ENCODE measurements at regions of chr1 and their contacts with region 1.

Region 1: GRCh38 chr1:202888531-202889360 is at the start of gene RABIF:
- DNase-seq: peak; percentile 97 to 99
- ATAC-seq: peak; percentile 98
- H3K4me3 ChIP-seq: peak within 1 kb of the TSS; percentile 56 to 62
- H3K27ac ChIP-seq: peak within 1 kb of the TSS; percentile 51 to 90
- H3K4me1 ChIP-seq: no peaks in the 10 kb centered on the region
- H3K27me3 ChIP-seq: no peaks in the 10 kb centered on the region
- total RNA-seq, gene RABIF: 7.3 to 7.5 TPM

Region 2: GRCh38 chr1:202810615-202811295 is 78.0 kb before region 1 on chr1 and contains the start of gene PCAT6:
- intact Hi-C with region 1: loop called (anchors 2 to 5 kb)
- DNase-seq: peak; percentile 96
- ATAC-seq: peak; percentile 96
- H3K4me3 ChIP-seq: peak within 1 kb of the TSS; percentile 62 to 76
- H3K27ac ChIP-seq: peak within 1 kb of the TSS in 1 of 2 donors; percentile 30
- H3K4me1 ChIP-seq: peaks cover 0 to 4% of the 10 kb centered on the region in 2 donors
- H3K27me3 ChIP-seq: no peaks in the 10 kb centered on the region
- total RNA-seq, gene PCAT6: 0.49 to 1.7 TPM

Region 3: DNA sequence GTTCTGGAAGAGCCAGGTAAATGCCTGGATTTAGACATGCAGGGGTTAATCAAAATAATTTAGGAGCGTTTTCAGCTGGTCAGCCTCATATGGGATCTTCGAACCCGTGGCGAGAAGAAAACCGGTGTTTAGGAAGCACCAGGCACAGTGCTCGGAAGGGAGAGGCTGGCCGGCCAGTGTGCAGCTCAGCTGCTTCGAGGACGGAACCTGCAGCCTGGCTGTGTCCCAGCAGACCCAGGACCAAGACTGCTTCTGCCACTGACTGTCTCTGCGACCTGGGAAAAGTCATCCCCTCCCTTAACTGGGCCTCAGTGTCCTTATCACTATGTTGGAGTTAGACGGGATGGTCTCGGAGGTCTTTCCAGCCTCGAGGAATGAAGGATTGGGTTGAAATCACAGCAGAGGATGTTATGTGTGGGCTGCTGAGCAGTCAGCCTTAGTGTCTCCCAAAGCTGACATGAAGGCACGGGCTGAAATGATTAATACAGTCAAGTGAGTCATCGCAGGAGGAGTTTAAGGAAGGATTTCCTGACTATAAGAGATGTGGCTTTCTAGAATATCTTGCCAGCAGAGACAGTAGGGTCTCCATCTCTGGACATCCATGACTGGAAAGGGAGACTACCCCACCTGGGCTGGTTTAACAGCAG is 158.4 kb after region 1 on chr1:
- intact Hi-C with region 1: no loop called
- DNase-seq: peak in 1 of 2 donors; percentile 42
- ATAC-seq: no peak
- H3K4me3 ChIP-seq: no peak overlapping the region
- H3K27ac ChIP-seq: no peak overlapping the region
- H3K4me1 ChIP-seq: no peaks in the 10 kb centered on the region
- H3K27me3 ChIP-seq: no peaks in the 10 kb centered on the region